ENCODE measurements at regions of chr10 and their contacts with region 1.

Region 1: DNA sequence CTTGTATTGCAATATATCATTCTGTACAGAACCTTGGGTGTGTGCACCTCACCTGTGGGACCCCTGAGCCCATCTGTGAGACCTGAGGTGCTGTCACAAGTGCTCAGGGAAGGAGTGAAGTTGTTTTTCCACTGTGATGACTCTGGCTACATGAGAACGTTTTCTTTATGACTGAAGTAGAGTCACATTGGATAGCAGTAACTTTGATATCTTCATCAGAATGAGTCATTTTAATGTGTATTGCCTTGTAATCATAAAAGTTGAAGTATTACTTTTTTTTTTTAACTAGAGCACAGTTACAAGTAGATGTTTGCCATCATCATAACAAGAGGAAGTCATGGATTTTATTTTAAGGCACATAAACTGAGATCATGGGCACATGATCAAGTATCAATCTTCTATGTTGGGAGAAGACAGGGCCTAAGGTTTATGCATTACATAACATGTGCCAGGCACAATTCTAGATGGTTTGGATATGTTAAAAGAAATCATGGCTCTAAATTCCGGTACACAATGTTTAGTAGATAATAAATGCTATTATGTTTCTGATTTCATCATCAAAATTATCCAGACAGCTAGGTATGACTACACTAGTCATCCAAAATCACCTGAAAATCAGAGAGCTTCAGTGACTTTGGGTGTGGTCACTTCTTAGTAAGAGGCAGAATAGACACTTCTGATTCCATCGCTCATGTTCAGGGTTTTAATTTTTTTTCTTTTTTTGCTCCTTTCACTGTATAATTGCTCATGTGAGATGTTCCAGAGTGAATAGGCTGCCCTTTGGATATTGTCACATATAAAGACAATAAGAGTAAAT is 82.7 kb upstream of the KLF6 start:
- DNase-seq: peak; percentile 46
- H3K4me3 Mint-ChIP-seq: no peak overlapping the region
- H3K27ac Mint-ChIP-seq: peak overlapping the region; percentile 70
- H3K4me1 Mint-ChIP-seq: peaks cover 53% of the 10 kb centered on the region
- H3K27me3 Mint-ChIP-seq: no peaks in the 10 kb centered on the region

Region 2: DNA sequence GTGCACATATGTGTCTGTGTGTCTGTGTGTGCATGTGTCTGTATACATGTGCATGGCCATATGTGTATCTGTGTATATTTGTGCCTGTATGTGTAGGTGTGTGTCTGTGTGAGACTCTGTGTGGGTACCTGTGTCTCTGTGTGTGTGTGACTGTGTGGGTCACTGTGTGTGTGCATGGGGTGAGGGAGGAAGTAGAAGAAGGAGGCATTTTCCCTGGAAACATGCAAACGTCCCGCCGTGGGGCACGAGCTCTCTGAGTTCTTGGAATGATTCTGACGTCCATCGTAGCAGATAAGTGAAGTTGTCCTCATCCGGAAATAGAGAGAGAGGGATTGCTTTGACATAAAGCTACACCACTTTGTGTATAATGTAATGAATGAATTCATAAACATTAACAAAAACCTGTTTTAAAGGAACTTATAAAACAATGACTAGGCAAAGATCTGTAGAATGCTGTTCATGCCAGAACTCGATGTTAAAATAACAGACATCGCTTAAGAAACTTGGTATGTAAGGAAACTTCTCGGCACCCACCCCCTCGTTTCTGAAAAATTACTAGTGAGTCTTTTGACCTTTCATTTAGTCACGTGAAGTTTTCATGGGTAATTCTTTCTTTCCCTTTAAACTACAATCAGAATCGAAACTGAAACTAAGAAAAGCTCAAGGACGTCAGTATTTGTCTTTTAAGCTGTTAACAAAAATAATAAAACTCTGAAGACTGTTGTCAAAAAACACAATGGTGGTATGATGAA is 39.1 kb before region 1 on chr10:
- CTCF ChIA-PET with region 1: no interaction called
- intact Hi-C with region 1: loop called (anchors 1 kb)
- DNase-seq: peak; percentile 82
- H3K4me3 Mint-ChIP-seq: peak overlapping the region; percentile 52
- H3K27ac Mint-ChIP-seq: peak overlapping the region; percentile 87
- H3K4me1 Mint-ChIP-seq: peaks cover 43% of the 10 kb centered on the region
- H3K27me3 Mint-ChIP-seq: no peaks in the 10 kb centered on the region

Region 3: DNA sequence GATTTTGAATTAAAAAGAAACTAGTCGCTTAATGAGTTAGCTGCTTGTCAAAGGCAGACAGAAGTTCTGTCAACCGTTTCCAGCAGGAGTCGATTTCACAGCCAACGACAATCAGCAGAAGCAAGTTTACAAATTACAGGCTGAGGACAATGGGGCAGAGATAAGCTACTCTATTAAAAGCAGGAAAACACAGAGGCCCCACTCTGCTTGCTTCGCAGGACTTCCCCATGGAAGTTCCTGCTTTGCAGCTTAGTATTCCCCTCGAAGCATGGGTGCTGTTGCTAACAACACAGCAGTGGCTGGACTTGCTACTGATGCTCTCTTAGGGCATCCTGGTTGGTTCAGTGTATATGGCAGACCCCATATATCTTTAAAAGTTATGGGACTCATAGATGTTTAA is 31.9 kb before region 1 on chr10:
- CTCF ChIA-PET with region 1: no interaction called
- intact Hi-C with region 1: loop called (anchors 1 kb)
- DNase-seq: no peak
- H3K4me3 Mint-ChIP-seq: no peak overlapping the region
- H3K27ac Mint-ChIP-seq: peak overlapping the region; percentile 78
- H3K4me1 Mint-ChIP-seq: peaks cover 36% of the 10 kb centered on the region
- H3K27me3 Mint-ChIP-seq: no peaks in the 10 kb centered on the region

Region 4: DNA sequence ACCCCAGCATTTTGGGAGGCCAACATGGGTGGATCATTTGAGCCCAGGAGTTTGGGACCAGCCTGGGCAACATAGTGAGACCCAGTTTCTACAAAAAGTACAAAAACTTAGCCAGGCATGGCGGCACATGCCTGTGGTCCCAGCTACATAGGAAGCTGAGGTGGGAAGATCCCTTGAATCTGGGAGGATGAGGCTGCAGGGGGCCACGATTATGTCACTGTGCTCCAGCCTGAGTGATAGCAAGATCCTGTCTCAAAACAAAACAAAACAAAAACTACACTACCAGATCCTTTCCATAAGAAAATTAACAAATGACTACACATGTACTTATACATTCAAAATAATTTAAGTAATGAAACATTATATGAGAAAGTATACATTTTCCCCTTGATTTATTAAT is 33.7 kb after region 1 on chr10:
- CTCF ChIA-PET with region 1: no interaction called
- intact Hi-C with region 1: loop called (anchors 1 kb)
- DNase-seq: peak; percentile 30
- H3K4me3 Mint-ChIP-seq: no peak overlapping the region
- H3K27ac Mint-ChIP-seq: no peak overlapping the region
- H3K4me1 Mint-ChIP-seq: peaks cover 19% of the 10 kb centered on the region
- H3K27me3 Mint-ChIP-seq: no peaks in the 10 kb centered on the region

Region 5: GRCh38 chr10:4006051-4006450 is 138.4 kb after region 1 on chr10:
- CTCF ChIA-PET with region 1: no interaction called
- intact Hi-C with region 1: no loop called
- DNase-seq: peak; percentile 7
- H3K4me3 Mint-ChIP-seq: no peak overlapping the region
- H3K27ac Mint-ChIP-seq: no peak overlapping the region
- H3K4me1 Mint-ChIP-seq: peaks cover 8% of the 10 kb centered on the region
- H3K27me3 Mint-ChIP-seq: peaks cover 1% of the 10 kb centered on the region